A549 (cell line): ENCODE measurements at regions of chr3 and their contacts with region 1.

Region 1: GRCh38 chr3:81302045-81302444 is 459.4 kb downstream of the GBE1 start:
- DNase-seq: peak; percentile 45 to 58
- ATAC-seq: peak; percentile 83 to 84; a peak in 5 of 6 replicates
- H3K4me3 ChIP-seq: no peak overlapping the region
- H3K27ac ChIP-seq: no peak overlapping the region
- H3K4me1 ChIP-seq: no peaks in the 10 kb centered on the region
- CTCF ChIP-seq: peak; percentile 63
- EP300 ChIP-seq: no peak
- POLR2A ChIP-seq: no peak
- RAD21 ChIP-seq: peak; percentile 53 to 68; a peak in 4 of 5 replicates

Region 2: GRCh38 chr3:81315030-81315429 is 13.0 kb after region 1 on chr3:
- CTCF ChIA-PET with region 1: interaction called, 11 read pairs
- POLR2A ChIA-PET with region 1: no interaction called
- DNase-seq: no peak
- ATAC-seq: no peak
- H3K4me3 ChIP-seq: no peak overlapping the region
- H3K27ac ChIP-seq: no peak overlapping the region
- H3K4me1 ChIP-seq: no peaks in the 10 kb centered on the region
- CTCF ChIP-seq: no peak
- EP300 ChIP-seq: no peak
- POLR2A ChIP-seq: no peak
- RAD21 ChIP-seq: no peak

Region 3: DNA sequence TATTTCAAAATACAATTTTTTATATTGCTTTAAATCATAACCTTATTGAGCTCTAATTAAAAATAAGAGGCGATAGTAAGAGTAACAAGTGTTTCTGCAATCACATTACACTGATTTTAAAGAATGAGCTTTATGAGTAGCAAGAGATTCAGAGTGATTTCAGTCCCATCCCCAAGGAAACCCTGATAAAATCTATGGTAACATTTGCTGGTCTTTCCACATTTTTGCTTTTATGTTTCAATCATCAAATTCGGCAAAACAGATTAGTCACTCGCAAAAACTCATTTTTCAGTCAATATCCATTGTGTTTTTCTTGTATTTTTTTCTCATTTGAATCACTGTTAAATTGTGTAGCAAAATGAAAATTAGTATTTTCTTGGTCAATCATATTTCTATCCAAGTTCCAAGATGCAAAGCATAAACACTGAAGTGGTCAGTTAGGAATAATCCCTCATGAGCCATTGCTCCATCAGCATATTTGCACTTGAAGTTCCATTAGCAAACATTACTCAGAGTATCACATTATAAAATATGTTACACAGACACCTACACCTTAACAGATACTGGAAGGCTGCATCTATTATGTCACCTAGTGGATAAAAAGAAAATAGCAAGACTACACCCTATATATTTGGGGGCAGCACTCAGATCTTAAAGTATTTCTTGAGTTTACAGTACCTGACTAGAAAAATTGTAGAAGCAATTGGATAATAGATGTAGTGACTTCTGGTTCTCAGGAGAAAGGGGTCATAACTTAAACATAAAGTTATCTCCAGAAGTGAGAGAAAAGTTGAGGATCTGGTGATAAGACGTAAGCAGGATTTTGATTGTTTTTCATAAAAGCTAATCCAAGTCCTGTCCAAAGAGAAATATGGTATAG is 36.9 kb after region 1 on chr3:
- CTCF ChIA-PET with region 1: interaction called, 15 read pairs
- POLR2A ChIA-PET with region 1: no interaction called
- DNase-seq: peak; percentile 24 to 28
- ATAC-seq: peak; percentile 89 to 92
- H3K4me3 ChIP-seq: no peak overlapping the region
- H3K27ac ChIP-seq: no peak overlapping the region
- H3K4me1 ChIP-seq: no peaks in the 10 kb centered on the region
- CTCF ChIP-seq: peak; percentile 53
- EP300 ChIP-seq: no peak
- POLR2A ChIP-seq: no peak
- RAD21 ChIP-seq: peak; percentile 49 to 56; a peak in 4 of 5 replicates